ENCODE measurements at regions of chr18 and their contacts with region 1.

Region 1: DNA sequence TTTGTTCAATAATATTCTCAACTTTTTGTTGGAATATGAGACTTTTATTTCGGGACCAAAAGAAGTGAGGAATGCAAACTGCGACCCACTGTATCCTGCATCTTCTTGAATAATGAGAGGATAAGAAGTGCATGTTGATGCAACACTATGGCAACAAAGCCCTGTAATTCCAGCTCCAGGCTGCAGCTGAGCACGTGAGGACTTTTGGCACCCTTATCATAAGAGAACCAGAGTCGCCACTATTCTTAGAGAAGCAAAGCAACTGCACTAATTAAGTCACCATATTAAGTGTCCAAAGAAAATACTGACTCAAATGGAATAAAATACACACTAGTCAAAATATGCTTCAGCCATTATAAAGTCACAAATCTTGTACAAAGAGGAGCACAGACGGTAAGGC is 65.8 kb downstream of the FAM210A start:
- DNase-seq: peak in 1 of 2 donors; percentile 34
- ATAC-seq: peak; percentile 63 to 91 (median 86)
- H3K4me3 ChIP-seq: no peak overlapping the region
- H3K27ac ChIP-seq: peak overlapping the region in 7 of 10 donors; percentile 11 to 75 (median 64)
- H3K4me1 ChIP-seq: peaks cover 16 to 45% (median 37%) of the 10 kb centered on the region in 9 donors
- H3K27me3 ChIP-seq: no peaks in the 10 kb centered on the region
- CTCF ChIP-seq: no peak

Region 2: GRCh38 chr18:13175754-13176210 is 484.7 kb before region 1 on chr18:
- intact Hi-C with region 1: no loop called
- DNase-seq: no peak
- ATAC-seq: peak in 2 of 8 donors; percentile 7 to 22
- H3K4me3 ChIP-seq: no peak overlapping the region
- H3K27ac ChIP-seq: no peak overlapping the region
- H3K4me1 ChIP-seq: peaks cover 0 to 7% (median 0%) of the 10 kb centered on the region in 9 donors
- H3K27me3 ChIP-seq: no peaks in the 10 kb centered on the region
- CTCF ChIP-seq: no peak

Region 3: GRCh38 chr18:13680612-13681011 is 20.1 kb after region 1 on chr18:
- intact Hi-C with region 1: loop called in 1 of 10 experiments (anchors 2 kb)
- DNase-seq: peak in 1 of 2 donors; percentile 36
- ATAC-seq: peak in 6 of 8 donors; percentile 59 to 75 (median 64)
- H3K4me3 ChIP-seq: no peak overlapping the region
- H3K27ac ChIP-seq: peak overlapping the region in 5 of 10 donors; percentile 84 to 90 (median 85)
- H3K4me1 ChIP-seq: peaks cover 3 to 58% (median 27%) of the 10 kb centered on the region in 9 donors
- H3K27me3 ChIP-seq: no peaks in the 10 kb centered on the region
- CTCF ChIP-seq: peak; percentile 17 to 64 (median 48)

Measured in heart right ventricle (tissue), 16 donors.